ENCODE measurements at regions of chr12 and their contacts with region 1.

Region 1: GRCh38 chr12:68610370-68611093 is at the start of gene RAP1B:
- DNase-seq: peak; percentile 94
- H3K4me3 ChIP-seq: peak within 1 kb of the TSS; percentile 62 to 94 (median 83)
- H3K27ac ChIP-seq: peak within 1 kb of the TSS; percentile 88 to 99 (median 97)
- H3K4me1 ChIP-seq: peaks cover 0 to 43% (median 33%) of the 10 kb centered on the region in 4 donors
- H3K27me3 ChIP-seq: no peaks in the 10 kb centered on the region
- CTCF ChIP-seq: no peak
- EP300 ChIP-seq: no peak
- POLR2A ChIP-seq: peak; percentile 75 to 78
- total RNA-seq, gene RAP1B: 197 to 251 (median 223) TPM

Region 2: GRCh38 chr12:68331869-68332727 is 278.4 kb before region 1 on chr12 and contains the start of gene MDM1:
- intact Hi-C with region 1: loop called (anchors 10 kb)
- DNase-seq: peak; percentile 99
- H3K4me3 ChIP-seq: peak within 1 kb of the TSS; percentile 67 to 96 (median 82)
- H3K27ac ChIP-seq: peak within 1 kb of the TSS; percentile 79 to 90 (median 84)
- H3K4me1 ChIP-seq: peaks cover 0 to 80% (median 69%) of the 10 kb centered on the region in 4 donors
- H3K27me3 ChIP-seq: no peaks in the 10 kb centered on the region
- CTCF ChIP-seq: no peak
- EP300 ChIP-seq: no peak
- POLR2A ChIP-seq: no peak
- total RNA-seq, gene MDM1: 73.3 to 113 (median 89.9) TPM

Region 3: DNA sequence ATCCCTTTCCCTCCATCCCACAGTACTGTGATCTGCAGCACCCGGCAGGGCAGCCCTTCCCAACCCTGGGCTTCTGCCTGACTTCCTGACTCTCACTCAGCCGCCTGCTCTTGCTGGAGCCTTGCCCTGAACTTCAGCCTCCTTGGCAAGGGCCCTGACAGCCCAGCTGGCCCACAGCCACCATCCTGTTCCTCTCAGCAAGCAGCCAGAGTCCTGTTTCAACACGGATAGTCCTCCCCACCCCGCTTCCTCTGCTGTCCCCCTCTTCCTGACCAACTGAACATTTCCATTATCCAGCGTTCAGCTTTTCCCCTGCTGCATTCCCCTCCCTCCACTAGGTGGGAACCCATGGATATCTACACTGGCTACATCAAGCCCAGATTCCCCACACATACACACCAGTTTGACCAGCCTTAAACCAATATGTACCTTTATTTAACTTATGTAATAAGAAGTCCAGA is 204.4 kb before region 1 on chr12:
- intact Hi-C with region 1: loop called (anchors 2 kb)
- DNase-seq: peak; percentile 98
- H3K4me3 ChIP-seq: peak overlapping the region in 1 of 4 donors; percentile 4
- H3K27ac ChIP-seq: peak overlapping the region; percentile 51 to 84 (median 72)
- H3K4me1 ChIP-seq: peaks cover 0 to 27% (median 21%) of the 10 kb centered on the region in 4 donors
- H3K27me3 ChIP-seq: no peaks in the 10 kb centered on the region
- CTCF ChIP-seq: peak; percentile 21 to 43 (median 28)
- EP300 ChIP-seq: peak in 1 of 4 donors; percentile 22
- POLR2A ChIP-seq: no peak

Region 4: DNA sequence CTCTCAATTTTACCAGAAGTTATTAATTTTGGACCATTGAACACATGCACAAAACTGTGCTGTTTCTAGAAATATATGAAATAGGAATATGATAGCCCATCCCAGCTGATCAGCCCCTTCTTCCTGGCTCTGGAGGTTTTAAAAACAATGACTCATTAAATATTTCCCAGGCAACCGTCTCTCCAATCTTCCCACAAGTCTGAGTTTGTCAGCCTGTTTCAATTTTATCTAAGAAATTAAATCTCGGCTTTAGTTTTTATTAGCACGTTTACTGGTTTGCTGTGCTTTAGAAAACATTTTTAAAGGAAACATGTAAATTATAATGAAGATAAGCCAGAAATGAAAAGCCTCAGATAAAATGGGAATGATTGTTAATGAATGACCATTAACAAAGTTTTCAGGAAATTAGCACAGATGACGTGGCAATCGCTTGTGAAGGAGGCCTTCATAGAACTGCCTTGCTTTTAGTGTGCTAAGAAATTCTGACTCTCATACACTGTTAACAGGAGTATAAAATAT is 89.2 kb before region 1 on chr12:
- intact Hi-C with region 1: loop called (anchors 10 kb)
- DNase-seq: no peak
- H3K4me3 ChIP-seq: no peak overlapping the region
- H3K27ac ChIP-seq: peak overlapping the region in 2 of 4 donors; percentile 18 to 30
- H3K4me1 ChIP-seq: no peaks in the 10 kb centered on the region
- H3K27me3 ChIP-seq: no peaks in the 10 kb centered on the region
- CTCF ChIP-seq: no peak
- EP300 ChIP-seq: no peak
- POLR2A ChIP-seq: no peak

Region 5: DNA sequence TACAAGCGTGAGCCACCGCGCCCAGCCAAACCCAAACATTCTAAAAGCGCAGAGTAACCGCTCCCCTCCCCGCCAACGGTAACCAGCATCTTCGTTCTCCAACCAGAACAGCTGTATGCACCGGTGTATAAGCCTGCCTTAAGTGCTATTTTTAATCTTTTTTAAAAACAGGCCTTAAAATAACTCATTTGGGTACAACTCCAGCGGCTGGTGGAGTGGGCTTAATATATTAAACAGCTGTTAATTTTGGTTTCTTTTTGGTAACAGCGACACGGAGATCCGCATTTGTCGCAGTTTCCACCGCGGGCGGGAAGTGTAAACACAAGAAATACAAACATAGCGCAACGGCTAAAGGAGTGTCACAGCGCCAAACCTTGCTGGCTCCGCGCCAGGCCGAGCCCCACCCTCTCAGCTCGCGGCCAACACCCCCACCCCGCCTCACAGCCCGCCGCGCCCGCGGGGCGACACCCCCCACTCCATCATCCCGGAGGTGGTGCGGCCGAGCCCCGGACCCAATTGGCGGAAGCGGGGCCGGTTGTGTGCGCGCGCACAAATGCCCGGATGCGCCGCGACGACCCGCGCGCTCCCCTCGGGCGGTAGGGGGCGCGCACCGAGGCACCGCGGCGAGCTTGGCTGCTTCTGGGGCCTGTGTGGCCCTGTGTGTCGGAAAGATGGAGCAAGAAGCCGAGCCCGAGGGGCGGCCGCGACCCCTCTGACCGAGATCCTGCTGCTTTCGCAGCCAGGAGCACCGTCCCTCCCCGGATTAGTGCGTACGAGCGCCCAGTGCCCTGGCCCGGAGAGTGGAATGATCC is 197.2 kb after region 1 on chr12 and contains the start of gene MDM2:
- intact Hi-C with region 1: loop called (anchors 5 kb)
- DNase-seq: peak; percentile 97
- H3K4me3 ChIP-seq: peak within 1 kb of the TSS; percentile 61 to 98 (median 86)
- H3K27ac ChIP-seq: peak within 1 kb of the TSS; percentile 92 to 100 (median 98)
- H3K4me1 ChIP-seq: peaks cover 0 to 33% (median 26%) of the 10 kb centered on the region in 4 donors
- H3K27me3 ChIP-seq: no peaks in the 10 kb centered on the region
- CTCF ChIP-seq: peak; percentile 77 to 82 (median 78)
- EP300 ChIP-seq: no peak
- POLR2A ChIP-seq: peak; percentile 90 to 92
- total RNA-seq, gene MDM2: 44.2 to 55.4 (median 47.8) TPM